ENCODE measurements at regions of chr12 and their contacts with region 1.

Region 1: DNA sequence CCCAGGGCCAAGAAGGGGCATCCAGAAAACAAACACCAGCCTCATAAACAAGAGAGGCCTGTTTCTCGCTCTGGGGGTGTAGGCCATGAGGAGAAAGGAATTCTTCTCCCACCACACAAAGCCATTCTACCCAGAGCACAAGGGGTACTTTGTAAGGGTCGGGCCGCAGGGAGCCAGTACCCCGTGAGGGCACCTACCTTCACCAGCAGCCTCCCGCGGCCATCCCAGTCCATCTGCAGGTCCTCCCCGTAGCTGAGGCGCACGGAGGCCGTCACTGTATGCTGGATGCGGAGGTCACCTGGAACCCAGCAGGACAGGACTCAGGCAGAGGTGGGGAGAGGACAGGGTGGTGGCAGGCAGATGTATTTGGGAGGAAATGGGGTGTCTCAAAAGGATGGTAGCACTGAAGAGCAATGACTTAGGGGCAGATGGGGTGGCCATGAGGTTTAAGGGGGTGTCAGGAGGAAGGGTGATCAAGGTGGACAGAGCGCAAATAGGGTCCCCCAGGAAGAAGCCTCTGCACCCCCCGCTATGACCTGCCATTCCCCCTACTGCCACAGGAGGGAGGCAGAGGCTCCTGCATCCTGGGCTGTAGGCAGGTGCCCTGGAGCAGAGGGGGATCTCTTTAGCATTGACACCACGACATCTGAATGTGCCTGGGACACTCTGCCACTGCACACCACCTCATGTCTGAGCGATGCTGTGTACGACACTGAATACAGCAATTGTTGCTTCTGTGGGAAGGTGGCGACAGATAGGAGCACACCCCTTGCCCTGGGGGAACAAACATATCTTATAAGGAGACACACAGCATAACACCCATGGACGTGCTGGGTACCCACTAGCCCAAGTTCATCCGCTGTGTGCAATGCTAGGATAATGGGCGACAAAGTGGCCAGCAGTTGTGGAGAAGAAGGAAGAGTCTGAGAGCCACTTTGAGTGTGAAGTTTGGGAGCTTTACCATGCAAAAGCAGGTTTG is 61.4 kb downstream of the VWF start:
- DNase-seq: peak in 1 of 2 experiments; percentile 72
- H3K4me3 ChIP-seq: no peak overlapping the region
- H3K4me1 ChIP-seq: no peaks in the 10 kb centered on the region
- H3K27me3 ChIP-seq: no peaks in the 10 kb centered on the region

Region 2: GRCh38 chr12:5643266-5643665 is 419.8 kb before region 1 on chr12:
- in situ Hi-C with region 1: no loop called
- DNase-seq: no peak
- H3K4me3 ChIP-seq: no peak overlapping the region
- H3K4me1 ChIP-seq: no peaks in the 10 kb centered on the region
- H3K27me3 ChIP-seq: no peaks in the 10 kb centered on the region

Region 3: DNA sequence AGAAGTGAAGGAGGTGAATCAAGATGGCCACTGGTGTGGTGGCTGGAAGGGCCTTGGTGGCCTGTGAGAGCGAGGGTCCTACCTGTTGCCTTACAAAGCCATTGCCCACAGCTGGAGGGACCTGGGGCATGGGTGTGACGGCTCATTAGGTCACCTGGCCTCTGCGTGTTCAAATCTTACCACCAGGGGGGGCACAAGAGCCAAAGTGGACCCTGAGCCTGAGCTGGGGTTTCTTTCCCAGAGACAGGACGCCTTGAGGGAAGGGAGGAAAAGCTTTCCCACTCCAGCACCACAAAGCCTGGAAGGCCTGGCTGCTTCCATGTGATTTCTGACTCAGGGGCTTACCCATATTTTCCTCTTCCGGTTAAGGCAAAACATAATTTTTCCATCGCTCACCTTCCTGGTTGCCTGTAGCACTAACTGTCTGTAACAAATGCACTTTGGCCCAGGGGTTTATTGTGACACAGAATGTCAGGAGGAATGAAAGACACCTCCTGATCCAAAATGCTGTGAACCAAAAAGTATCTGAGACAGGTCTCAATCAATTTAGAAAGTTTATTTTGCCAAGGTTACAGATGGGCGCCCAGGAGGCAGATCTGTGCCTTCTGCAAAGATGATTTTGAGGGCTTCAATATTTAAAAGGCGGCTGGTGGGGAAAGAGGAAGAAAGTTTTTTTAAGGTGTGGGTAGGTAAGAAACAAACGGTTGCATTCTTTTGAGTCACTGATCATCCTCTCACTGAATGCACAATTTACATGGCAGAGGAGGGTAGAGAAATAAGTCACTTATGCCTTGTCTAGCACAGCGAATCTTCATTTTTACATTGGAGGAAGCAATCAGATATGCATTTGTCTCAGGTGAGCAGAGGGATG is 132.9 kb after region 1 on chr12:
- in situ Hi-C with region 1: loop called (anchors 10 kb)
- DNase-seq: peak; percentile 82 to 93
- H3K4me3 ChIP-seq: no peak overlapping the region
- H3K4me1 ChIP-seq: peaks cover 11% of the 10 kb centered on the region
- H3K27me3 ChIP-seq: no peaks in the 10 kb centered on the region

Region 4: GRCh38 chr12:6451348-6452244 is 388.6 kb after region 1 on chr12 and contains the start of gene TAPBPL:
- in situ Hi-C with region 1: loop called (anchors 10 kb)
- DNase-seq: no peak
- H3K4me3 ChIP-seq: no peak within 1 kb of the TSS; the same call in 1 of the 2 replicates
- H3K4me1 ChIP-seq: peaks cover 8% of the 10 kb centered on the region; the same call in 1 of the 2 replicates
- H3K27me3 ChIP-seq: no peaks in the 10 kb centered on the region

Measured in HAP-1 (cell line).